ENCODE measurements at regions of chr12 and their contacts with region 1.

Region 1: DNA sequence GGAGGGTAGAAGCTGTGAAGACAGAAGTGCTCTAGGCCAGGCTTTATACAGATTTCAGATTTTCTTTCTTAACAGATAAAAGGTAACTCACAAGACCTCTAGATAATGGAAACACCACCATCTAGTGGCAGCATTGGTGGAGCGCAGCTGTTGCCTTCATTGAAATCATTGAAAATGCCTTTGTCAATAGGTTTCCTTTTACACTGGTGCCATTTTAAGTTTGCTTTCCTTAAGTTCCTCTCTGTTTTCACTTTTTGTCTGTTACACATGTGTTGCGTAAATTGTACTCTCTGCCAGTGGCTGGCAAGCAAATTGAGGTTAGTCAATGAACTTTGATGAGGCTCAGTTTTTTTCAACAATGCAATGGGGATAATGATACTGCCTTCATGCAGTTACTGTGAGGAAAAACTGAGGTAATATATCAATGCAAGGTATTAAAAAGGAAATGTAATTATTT is 31.1 kb downstream of the ALDH1L2 start:
- DNase-seq: peak; percentile 94
- H3K4me3 Mint-ChIP-seq: no peak overlapping the region
- H3K27ac Mint-ChIP-seq: no peak overlapping the region
- H3K4me1 Mint-ChIP-seq: peaks cover 4% of the 10 kb centered on the region
- H3K27me3 Mint-ChIP-seq: peaks cover 3% of the 10 kb centered on the region

Region 2: GRCh38 chr12:104201238-104202001 is 851.7 kb before region 1 on chr12:
- intact Hi-C with region 1: loop called (anchors 5 kb)
- DNase-seq: peak; percentile 85
- H3K4me3 Mint-ChIP-seq: no peak overlapping the region
- H3K27ac Mint-ChIP-seq: no peak overlapping the region
- H3K4me1 Mint-ChIP-seq: peaks cover 2% of the 10 kb centered on the region
- H3K27me3 Mint-ChIP-seq: peaks cover 18% of the 10 kb centered on the region

Region 3: DNA sequence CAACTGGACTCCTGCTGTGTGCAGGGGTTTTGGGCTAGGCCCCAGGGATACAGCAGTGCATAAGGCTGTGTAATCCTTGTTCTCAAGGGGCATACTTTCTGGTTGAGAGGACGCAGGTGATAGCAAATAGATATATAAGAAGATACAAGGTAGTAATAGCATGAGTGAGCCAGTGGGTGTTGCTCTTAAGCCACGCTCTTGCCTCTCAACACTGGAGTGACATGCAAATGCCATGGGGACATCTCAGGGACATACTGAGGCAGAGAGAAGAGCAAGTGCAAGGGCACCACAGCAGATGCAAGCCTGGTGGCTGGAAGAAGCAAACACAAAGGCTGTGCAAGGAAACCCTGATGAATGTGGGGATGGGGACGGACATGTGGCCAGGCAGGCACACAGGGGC is 373.1 kb before region 1 on chr12:
- intact Hi-C with region 1: loop called (anchors 1 kb)
- DNase-seq: peak; percentile 82
- H3K4me3 Mint-ChIP-seq: peak overlapping the region; percentile 10
- H3K27ac Mint-ChIP-seq: peak overlapping the region; percentile 72
- H3K4me1 Mint-ChIP-seq: peaks cover 68% of the 10 kb centered on the region
- H3K27me3 Mint-ChIP-seq: no peaks in the 10 kb centered on the region

Region 4: GRCh38 chr12:104720339-104721038 is 332.7 kb before region 1 on chr12:
- intact Hi-C with region 1: loop called (anchors 5 kb)
- DNase-seq: peak; percentile 93
- H3K4me3 Mint-ChIP-seq: peak overlapping the region; percentile 76
- H3K27ac Mint-ChIP-seq: peak overlapping the region; percentile 89
- H3K4me1 Mint-ChIP-seq: peaks cover 60% of the 10 kb centered on the region
- H3K27me3 Mint-ChIP-seq: no peaks in the 10 kb centered on the region

Region 5: GRCh38 chr12:104877123-104877705 is 175.9 kb before region 1 on chr12:
- intact Hi-C with region 1: loop called (anchors 10 kb)
- DNase-seq: peak; percentile 76
- H3K4me3 Mint-ChIP-seq: no peak overlapping the region
- H3K27ac Mint-ChIP-seq: no peak overlapping the region
- H3K4me1 Mint-ChIP-seq: peaks cover 3% of the 10 kb centered on the region
- H3K27me3 Mint-ChIP-seq: peaks cover 23% of the 10 kb centered on the region

Region 6: DNA sequence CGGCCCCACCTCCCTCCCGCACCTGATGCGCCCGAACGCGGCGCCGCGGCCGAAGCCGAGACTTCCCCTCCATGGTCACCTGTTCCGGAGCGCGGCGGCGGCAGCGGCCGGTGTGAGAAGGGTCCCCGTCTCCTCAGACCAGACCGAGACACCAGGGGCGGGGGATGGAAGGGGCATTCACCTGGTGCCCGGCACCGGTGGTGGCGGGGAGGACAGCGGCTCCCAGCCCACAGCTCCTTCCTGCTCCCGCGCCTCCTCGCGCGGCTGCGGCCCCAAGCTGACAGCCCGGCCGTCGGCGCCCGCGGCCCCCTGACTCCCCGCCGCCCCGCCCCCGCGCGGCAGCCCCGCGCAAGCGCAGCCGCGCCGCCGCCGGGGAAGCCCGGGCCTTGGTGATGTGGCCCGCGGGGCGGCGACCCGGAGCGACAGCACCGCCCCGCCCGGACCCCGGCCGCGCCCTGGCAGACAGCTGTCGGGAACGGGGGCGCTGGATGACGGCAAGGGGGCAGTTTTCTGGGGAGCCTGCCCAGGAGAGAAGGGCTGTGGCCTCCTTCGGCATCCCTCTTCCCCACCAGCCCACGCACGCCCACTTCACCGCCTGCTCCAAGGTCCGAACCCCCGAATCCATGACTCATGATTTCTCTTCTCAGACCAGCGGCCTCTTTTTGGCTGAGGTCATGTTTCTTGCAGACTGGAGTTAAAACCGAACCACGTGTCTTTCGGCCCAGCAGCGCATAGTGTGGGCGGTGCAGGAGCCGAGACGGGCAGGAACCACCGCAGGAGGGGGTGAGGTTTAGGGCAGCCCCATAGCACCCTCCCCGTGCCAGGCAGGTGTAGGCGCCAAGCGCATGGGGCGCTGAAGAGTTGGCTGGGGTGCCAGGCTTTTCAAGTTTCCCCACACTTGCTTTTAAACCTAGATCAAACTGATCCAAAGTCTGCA is 94.9 kb before region 1 on chr12 and contains the start of gene SLC41A2:
- intact Hi-C with region 1: loop called (anchors 2 kb)
- DNase-seq: peak; percentile 95
- H3K4me3 Mint-ChIP-seq: peak within 1 kb of the TSS; percentile 85
- H3K27ac Mint-ChIP-seq: peak within 1 kb of the TSS; percentile 92
- H3K4me1 Mint-ChIP-seq: peaks cover 29% of the 10 kb centered on the region
- H3K27me3 Mint-ChIP-seq: peaks cover 39% of the 10 kb centered on the region
- total RNA-seq, gene SLC41A2: 11.5 and 12.3 TPM in 2 replicates

Region 7: DNA sequence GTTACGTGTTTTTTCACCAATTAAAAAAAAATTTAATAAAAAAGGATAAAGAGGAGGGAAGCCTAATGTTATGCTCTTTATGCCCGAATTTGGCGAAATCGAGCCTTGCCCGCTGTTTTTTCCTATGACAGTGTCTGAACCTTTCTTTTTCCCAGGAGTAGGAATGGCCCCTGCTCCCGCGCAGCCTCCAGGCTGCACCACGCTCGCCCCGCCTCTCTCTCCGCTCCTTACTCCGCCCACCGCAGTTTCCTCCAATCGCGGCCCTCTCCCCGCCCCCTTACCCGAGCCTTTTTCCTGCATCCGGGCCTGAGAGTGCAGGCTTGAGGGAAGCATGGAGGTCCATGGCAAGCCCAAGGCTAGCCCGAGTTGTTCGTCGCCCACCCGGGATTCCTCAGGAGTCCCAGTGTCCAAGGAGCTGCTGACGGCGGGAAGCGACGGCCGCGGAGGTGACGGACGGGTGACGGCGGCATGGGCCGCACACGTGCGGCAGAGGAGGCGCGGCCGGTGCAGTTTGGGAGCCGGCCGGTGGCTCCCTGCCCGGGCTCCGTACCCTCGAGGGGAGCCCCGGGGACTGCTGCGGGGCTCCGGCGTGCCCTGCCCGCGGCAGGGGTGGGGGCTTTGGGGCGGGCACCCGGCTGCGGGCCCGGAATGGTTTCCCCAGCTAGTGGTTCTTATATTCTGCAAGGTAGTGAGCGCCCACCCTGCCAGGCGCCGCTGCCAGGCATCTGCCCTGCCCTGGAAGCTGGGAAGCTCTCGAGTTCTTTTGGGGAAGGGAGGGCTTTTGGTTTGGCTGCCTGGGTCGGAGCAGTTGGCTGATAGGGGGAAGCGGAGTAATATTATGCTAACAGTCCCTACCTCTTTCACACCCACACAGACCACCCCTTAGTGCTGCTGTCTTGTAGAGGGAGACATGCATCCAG is 66.9 kb before region 1 on chr12 and contains the start of gene NOPCHAP1:
- intact Hi-C with region 1: loop called (anchors 2 kb)
- DNase-seq: peak; percentile 97
- H3K4me3 Mint-ChIP-seq: peak within 1 kb of the TSS; percentile 89
- H3K27ac Mint-ChIP-seq: peak within 1 kb of the TSS; percentile 85
- H3K4me1 Mint-ChIP-seq: peaks cover 37% of the 10 kb centered on the region
- H3K27me3 Mint-ChIP-seq: peaks cover 7% of the 10 kb centered on the region
- total RNA-seq, gene NOPCHAP1: 39.8 and 41.3 TPM in 2 replicates